ENCODE measurements at regions of chr1 and their contacts with region 1.

Region 1: GRCh38 chr1:9784508-9785133 is 39.1 kb downstream of the CLSTN1 start:
- DNase-seq: peak in 1 of 2 donors; percentile 33
- ATAC-seq: peak in 1 of 8 donors; percentile 44
- H3K4me3 ChIP-seq: no peak overlapping the region
- H3K27ac ChIP-seq: no peak overlapping the region
- H3K4me1 ChIP-seq: peaks cover 0 to 16% (median 0%) of the 10 kb centered on the region in 9 donors
- H3K27me3 ChIP-seq: no peaks in the 10 kb centered on the region
- CTCF ChIP-seq: peak; percentile 45 to 76 (median 66)

Region 2: GRCh38 chr1:9724706-9725476 is 59.7 kb before region 1 on chr1:
- intact Hi-C with region 1: no loop called
- DNase-seq: peak in 1 of 2 donors; percentile 59
- ATAC-seq: peak in 7 of 8 donors; percentile 41 to 68 (median 51)
- H3K4me3 ChIP-seq: no peak overlapping the region
- H3K27ac ChIP-seq: no peak overlapping the region
- H3K4me1 ChIP-seq: no peaks in the 10 kb centered on the region
- H3K27me3 ChIP-seq: no peaks in the 10 kb centered on the region
- CTCF ChIP-seq: peak; percentile 32 to 91 (median 71)

Region 3: DNA sequence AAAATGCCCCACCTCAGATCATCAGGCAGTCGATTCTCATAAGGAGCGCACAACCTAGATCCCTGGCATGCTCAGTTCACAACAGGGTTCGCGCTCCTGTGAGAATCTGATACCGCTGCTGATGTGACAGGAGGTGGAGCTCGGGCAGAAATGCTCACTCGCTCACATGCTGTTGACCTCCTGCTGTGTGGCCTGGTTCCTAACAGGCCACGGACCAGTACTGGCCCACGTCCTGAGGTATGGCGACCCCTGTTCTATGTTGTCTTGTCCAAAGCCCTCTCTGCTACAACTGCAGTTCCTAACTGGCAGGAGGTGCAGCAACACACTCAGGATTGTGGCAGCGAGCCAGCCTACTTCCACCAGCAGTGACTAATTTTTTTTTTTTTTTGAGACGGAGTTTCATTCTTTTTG is 31.5 kb before region 1 on chr1:
- intact Hi-C with region 1: no loop called
- DNase-seq: peak; percentile 38 to 50
- ATAC-seq: peak in 4 of 8 donors; percentile 37 to 69 (median 54)
- H3K4me3 ChIP-seq: no peak overlapping the region
- H3K27ac ChIP-seq: no peak overlapping the region
- H3K4me1 ChIP-seq: peaks cover 0 to 22% (median 11%) of the 10 kb centered on the region in 9 donors
- H3K27me3 ChIP-seq: no peaks in the 10 kb centered on the region
- CTCF ChIP-seq: no peak

Region 4: DNA sequence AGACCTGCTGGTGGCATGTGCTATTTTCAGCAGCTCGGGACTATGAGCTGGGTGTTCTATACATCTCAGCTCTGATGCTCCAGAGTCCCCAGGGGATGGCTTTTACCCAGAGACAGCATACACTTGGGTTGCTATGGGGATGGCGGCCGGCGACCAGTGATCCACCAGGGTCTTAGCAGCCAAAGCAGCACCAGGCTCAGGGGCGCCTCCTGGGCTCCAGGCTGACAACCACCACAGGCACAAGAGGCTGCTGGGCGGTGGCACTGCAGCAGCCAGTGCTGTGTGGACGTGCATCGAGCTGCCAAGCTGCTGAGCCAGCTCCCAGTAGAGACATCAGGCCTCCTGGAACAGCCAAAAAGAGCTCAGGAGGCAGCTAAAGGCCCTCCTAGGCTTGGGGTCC is 76.7 kb after region 1 on chr1:
- intact Hi-C with region 1: loop called in 8 of 10 experiments (anchors 2 to 5 kb)
- DNase-seq: no peak
- ATAC-seq: no peak
- H3K4me3 ChIP-seq: no peak overlapping the region
- H3K27ac ChIP-seq: no peak overlapping the region
- H3K4me1 ChIP-seq: peaks cover 0 to 28% (median 15%) of the 10 kb centered on the region in 9 donors
- H3K27me3 ChIP-seq: no peaks in the 10 kb centered on the region
- CTCF ChIP-seq: no peak

Region 5: GRCh38 chr1:9867408-9868243 is 83.0 kb after region 1 on chr1:
- intact Hi-C with region 1: loop called (anchors 1 to 5 kb)
- DNase-seq: peak; percentile 70 to 79
- ATAC-seq: peak; percentile 81 to 92 (median 84)
- H3K4me3 ChIP-seq: no peak overlapping the region
- H3K27ac ChIP-seq: no peak overlapping the region
- H3K4me1 ChIP-seq: peaks cover 0 to 25% (median 14%) of the 10 kb centered on the region in 9 donors
- H3K27me3 ChIP-seq: no peaks in the 10 kb centered on the region
- CTCF ChIP-seq: peak; percentile 94 to 99 (median 98)

Region 6: DNA sequence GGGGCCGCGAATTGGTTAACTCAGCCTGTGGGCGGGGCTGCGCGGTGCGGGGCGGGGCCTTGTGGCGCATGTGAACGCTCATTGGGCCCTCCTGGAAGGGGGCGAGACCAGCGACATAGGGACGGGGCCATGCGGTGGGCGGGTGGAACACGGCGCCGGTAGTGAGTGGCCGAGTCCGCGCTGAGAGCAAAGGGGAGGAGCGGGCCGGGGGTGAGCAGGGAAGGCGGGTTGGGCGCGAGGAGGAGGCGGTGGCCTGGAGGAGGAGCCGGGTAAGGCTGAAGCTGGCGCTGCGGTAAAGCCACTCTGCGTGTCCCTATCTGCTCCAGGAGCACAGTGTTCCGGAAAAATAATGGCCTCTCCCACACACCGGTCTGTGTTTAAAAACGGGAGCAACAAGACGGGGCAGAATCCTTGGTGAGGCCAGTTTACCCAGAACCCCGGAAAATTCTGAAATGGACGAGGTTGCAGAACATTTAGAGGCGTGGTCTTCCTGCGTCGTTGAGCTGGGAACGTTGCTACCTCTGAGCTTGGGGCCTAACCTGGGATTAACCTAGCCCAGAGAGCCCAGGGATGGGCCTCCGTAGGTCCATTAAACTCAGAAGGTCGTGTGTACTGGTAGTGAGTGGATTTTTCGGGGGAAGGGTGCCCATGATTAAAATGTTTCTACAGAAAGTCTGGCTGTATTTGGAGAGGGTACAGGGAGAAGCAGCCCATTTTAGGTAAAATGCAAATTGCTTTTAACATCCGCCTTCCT is 126.0 kb after region 1 on chr1:
- intact Hi-C with region 1: loop called in 3 of 10 experiments (anchors 5 to 10 kb)
- DNase-seq: peak; percentile 100
- ATAC-seq: peak; percentile 97 to 99 (median 98)
- H3K4me3 ChIP-seq: peak overlapping the region; percentile 20 to 64 (median 59)
- H3K27ac ChIP-seq: peak overlapping the region; percentile 85 to 99 (median 92)
- H3K4me1 ChIP-seq: peaks cover 5 to 67% (median 32%) of the 10 kb centered on the region in 9 donors
- H3K27me3 ChIP-seq: no peaks in the 10 kb centered on the region
- CTCF ChIP-seq: peak in 1 of 9 donors; percentile 8

Region 7: GRCh38 chr1:9916452-9916851 is 131.8 kb after region 1 on chr1:
- intact Hi-C with region 1: loop called in 3 of 10 experiments (anchors 5 to 10 kb)
- DNase-seq: no peak
- ATAC-seq: no peak
- H3K4me3 ChIP-seq: no peak overlapping the region
- H3K27ac ChIP-seq: no peak overlapping the region
- H3K4me1 ChIP-seq: peaks cover under 1 to 21% (median 8%) of the 10 kb centered on the region in 9 donors
- H3K27me3 ChIP-seq: no peaks in the 10 kb centered on the region
- CTCF ChIP-seq: no peak

Region 8: GRCh38 chr1:10430216-10431069 is 645.8 kb after region 1 on chr1 and contains the start of gene CENPS:
- intact Hi-C with region 1: loop called in 1 of 10 experiments (anchors 5 kb)
- DNase-seq: peak; percentile 90 to 92
- ATAC-seq: peak; percentile 96 to 98 (median 98)
- H3K4me3 ChIP-seq: peak within 1 kb of the TSS; percentile 52 to 93 (median 75)
- H3K27ac ChIP-seq: peak within 1 kb of the TSS in 9 of 10 donors; percentile 43 to 81 (median 67)
- H3K4me1 ChIP-seq: peaks cover 0 to 19% (median 13%) of the 10 kb centered on the region in 9 donors
- H3K27me3 ChIP-seq: no peaks in the 10 kb centered on the region
- CTCF ChIP-seq: peak; percentile 92 to 98 (median 96)
- total RNA-seq, gene CENPS: 4.9 to 10.7 (median 9.4) TPM